B cell (primary cell): ENCODE measurements at regions of chr10 and their contacts with region 1.

Region 1: DNA sequence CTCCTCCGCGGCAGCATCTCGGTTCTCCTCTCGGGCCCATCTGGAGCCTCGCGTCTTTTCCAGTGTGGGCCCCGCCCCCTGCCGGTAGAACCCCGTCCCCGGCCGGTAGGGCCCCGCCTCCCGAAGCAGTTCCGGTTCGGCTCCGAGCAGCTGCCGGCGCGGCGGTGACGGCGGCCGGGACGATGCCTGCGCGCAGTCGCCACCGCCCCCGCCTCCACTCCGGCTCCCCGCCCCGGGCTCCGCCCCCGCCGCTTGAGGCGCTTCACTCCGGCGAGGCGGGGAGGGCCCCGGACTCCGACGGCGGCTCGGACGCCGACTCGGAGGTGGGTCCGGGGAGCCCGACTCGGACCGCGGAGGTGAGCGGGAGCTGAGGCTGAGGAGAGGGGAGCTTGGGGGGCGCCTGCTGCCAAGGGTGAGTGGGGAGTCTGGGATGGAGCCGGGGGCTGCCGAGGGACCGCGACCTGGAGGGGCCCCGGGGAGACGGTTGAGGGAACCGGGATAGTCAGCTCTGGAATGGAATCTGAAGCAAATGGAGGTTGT is at the start of gene SAMD8:
- DNase-seq: peak; percentile 98
- ATAC-seq: peak; percentile 84
- H3K4me3 ChIP-seq: peak within 1 kb of the TSS; percentile 73 to 100 (median 91)
- H3K4me3 Mint-ChIP-seq: peak within 1 kb of the TSS; percentile 89
- H3K27ac ChIP-seq: peak within 1 kb of the TSS; percentile 98
- H3K27ac Mint-ChIP-seq: peak within 1 kb of the TSS; percentile 90
- H3K4me1 ChIP-seq: peaks cover 18 to 24% of the 10 kb centered on the region in 2 donors
- H3K4me1 Mint-ChIP-seq: peaks cover 44% of the 10 kb centered on the region
- H3K27me3 ChIP-seq: no peaks in the 10 kb centered on the region
- H3K27me3 Mint-ChIP-seq: no peaks in the 10 kb centered on the region
- CTCF ChIP-seq: peak; percentile 34
- total RNA-seq, gene SAMD8: 31.7 and 35.7 TPM in 2 replicates

Region 2: DNA sequence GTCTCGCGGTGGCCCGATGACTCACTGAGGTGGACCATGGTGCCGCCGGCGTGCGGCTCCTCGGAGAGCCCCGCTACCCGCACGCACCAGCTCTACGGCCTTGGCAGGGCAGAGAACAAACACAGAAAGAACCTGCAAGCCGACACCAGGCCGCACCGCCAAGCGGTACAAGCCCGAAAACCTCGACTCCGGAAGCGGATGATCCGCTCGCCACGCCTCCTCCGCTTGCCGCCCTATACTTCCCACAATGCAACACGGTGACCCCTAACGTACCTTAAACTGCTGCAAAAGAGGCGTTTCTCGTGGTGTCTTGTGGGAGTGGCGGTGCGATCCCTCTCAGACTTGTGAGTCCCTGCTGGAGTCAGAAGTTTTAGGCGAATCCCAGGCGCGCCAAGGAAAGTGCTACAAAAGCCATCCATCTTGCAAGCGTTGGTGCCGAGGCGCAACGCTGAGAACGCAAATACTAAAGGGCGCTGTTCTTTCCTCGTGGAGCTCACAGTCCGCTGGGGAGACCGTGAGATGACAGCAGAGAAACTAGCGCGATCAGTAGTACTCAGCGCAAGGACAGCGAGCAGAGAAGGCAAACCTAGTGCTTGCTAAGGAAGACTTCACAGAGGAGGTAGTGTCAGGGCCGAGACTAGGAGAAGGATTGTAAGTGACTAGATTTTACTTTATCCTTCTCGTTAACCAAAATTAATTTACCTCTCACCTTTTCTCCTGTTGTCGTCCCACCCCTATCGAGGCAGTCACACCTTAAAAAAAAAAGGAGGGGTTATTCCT is 1858.8 kb before region 1 on chr10 and contains the start of gene MRPS16:
- CTCF ChIA-PET with region 1: no interaction called
- POLR2A ChIA-PET with region 1: no interaction called
- intact Hi-C with region 1: loop called (anchors 2 kb)
- DNase-seq: peak; percentile 95
- ATAC-seq: peak; percentile 90
- H3K4me3 ChIP-seq: peak within 1 kb of the TSS; percentile 76 to 98 (median 90)
- H3K4me3 Mint-ChIP-seq: peak within 1 kb of the TSS; percentile 100
- H3K27ac ChIP-seq: peak within 1 kb of the TSS; percentile 83 to 92
- H3K27ac Mint-ChIP-seq: peak within 1 kb of the TSS; percentile 90
- H3K4me1 ChIP-seq: peaks cover 23 to 28% of the 10 kb centered on the region in 2 donors
- H3K4me1 Mint-ChIP-seq: peaks cover 43% of the 10 kb centered on the region
- H3K27me3 ChIP-seq: no peaks in the 10 kb centered on the region
- H3K27me3 Mint-ChIP-seq: no peaks in the 10 kb centered on the region
- CTCF ChIP-seq: no peak
- total RNA-seq, gene MRPS16: 47.9 and 49.6 TPM in 2 replicates

Region 3: GRCh38 chr10:74826142-74827044 is 285.0 kb before region 1 on chr10 and contains the start of gene KAT6B:
- CTCF ChIA-PET with region 1: no interaction called
- POLR2A ChIA-PET with region 1: no interaction called
- intact Hi-C with region 1: loop called (anchors 1 kb)
- DNase-seq: peak; percentile 100
- ATAC-seq: peak; percentile 75
- H3K4me3 ChIP-seq: peak within 1 kb of the TSS; percentile 81 to 99 (median 90)
- H3K4me3 Mint-ChIP-seq: peak within 1 kb of the TSS; percentile 93
- H3K27ac ChIP-seq: peak within 1 kb of the TSS; percentile 91 to 99
- H3K27ac Mint-ChIP-seq: peak within 1 kb of the TSS; percentile 97
- H3K4me1 ChIP-seq: peaks cover 30 to 38% of the 10 kb centered on the region in 2 donors
- H3K4me1 Mint-ChIP-seq: peaks cover 42% of the 10 kb centered on the region
- H3K27me3 ChIP-seq: no peaks in the 10 kb centered on the region
- H3K27me3 Mint-ChIP-seq: no peaks in the 10 kb centered on the region
- CTCF ChIP-seq: peak; percentile 39
- total RNA-seq, gene KAT6B: 111 and 119 TPM in 2 replicates

Region 4: GRCh38 chr10:75129537-75129936 is 18.1 kb after region 1 on chr10:
- CTCF ChIA-PET with region 1: interaction called, 4 read pairs
- POLR2A ChIA-PET with region 1: interaction called, 4 read pairs
- intact Hi-C with region 1: loop called (anchors 1 kb)
- DNase-seq: peak; percentile 48
- ATAC-seq: peak; percentile 12
- H3K4me3 ChIP-seq: peak overlapping the region in 1 of 5 experiments; percentile 31
- H3K4me3 Mint-ChIP-seq: peak overlapping the region; percentile 73
- H3K27ac ChIP-seq: peak overlapping the region; percentile 82 to 99
- H3K27ac Mint-ChIP-seq: peak overlapping the region; percentile 95
- H3K4me1 ChIP-seq: peaks cover 36 to 40% of the 10 kb centered on the region in 2 donors
- H3K4me1 Mint-ChIP-seq: peaks cover 51% of the 10 kb centered on the region
- H3K27me3 ChIP-seq: no peaks in the 10 kb centered on the region
- H3K27me3 Mint-ChIP-seq: no peaks in the 10 kb centered on the region
- CTCF ChIP-seq: no peak

Region 5: DNA sequence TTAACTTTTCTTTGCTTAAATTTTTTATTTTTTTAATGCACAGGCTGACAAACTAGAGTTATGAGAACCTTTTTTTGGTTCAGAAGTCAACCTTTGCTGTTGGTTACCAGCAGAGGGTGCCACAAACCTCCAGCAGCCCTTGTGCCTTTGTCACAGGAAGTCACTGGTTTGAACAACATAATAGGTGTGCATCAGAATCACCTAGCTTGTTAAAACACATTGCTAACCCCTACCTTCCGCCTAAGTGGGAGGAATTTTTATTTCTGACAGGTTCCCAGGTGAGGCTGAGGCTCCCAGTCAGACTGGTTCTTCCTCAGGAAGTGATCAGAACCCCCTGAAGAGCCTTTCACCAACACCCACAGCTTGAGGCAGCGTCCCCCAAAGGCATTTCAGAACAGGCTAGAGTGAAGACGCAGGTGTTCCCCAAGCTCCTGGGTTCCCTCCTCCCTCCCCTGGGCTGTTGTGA is 76.6 kb after region 1 on chr10:
- CTCF ChIA-PET with region 1: interaction called, 4 read pairs
- POLR2A ChIA-PET with region 1: interaction called, 11 read pairs
- intact Hi-C with region 1: no loop called
- DNase-seq: peak; percentile 77
- ATAC-seq: peak; percentile 73
- H3K4me3 ChIP-seq: no peak overlapping the region
- H3K4me3 Mint-ChIP-seq: no peak overlapping the region
- H3K27ac ChIP-seq: peak overlapping the region in 1 of 2 donors; percentile 11
- H3K27ac Mint-ChIP-seq: peak overlapping the region; percentile 41
- H3K4me1 ChIP-seq: peaks cover 3% of the 10 kb centered on the region in 2 donors
- H3K4me1 Mint-ChIP-seq: no peaks in the 10 kb centered on the region
- H3K27me3 ChIP-seq: no peaks in the 10 kb centered on the region
- H3K27me3 Mint-ChIP-seq: no peaks in the 10 kb centered on the region
- CTCF ChIP-seq: peak; percentile 79

Region 6: DNA sequence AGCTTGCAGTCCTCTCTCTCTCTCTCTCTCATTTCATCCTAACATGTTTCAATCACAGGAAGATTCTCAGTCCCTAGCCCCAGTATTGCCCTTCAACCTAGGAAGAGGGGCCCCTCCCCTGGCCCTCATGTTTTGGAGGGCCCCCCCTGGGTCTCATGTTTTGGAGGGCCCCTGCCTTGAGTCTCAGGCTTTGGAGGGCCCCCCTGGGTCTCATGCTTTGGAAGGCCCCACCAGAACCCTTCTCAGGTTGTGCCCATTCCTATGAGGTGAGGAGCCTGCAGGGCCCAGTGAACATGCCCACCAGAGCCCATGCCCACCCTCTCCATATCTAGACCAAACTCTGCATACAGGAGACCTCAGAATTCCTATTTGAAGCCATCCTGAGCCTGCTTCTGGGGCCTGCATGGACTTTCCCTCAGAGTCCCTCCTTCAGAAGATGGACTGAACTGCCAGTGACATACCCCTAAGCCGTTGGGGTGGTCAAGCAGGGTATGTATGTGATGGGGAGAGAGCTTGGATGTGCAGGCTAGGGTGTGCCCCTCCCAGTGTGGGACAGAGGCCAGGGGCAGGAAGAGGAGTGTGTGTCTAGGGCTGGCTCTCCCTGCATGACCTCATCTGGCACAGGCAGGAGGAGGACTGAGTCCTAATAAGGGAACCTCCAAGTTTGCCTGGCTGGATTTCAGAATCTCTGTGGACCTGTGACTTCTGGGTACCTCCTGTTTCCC is 91.0 kb after region 1 on chr10:
- CTCF ChIA-PET with region 1: no interaction called
- POLR2A ChIA-PET with region 1: no interaction called
- intact Hi-C with region 1: no loop called
- DNase-seq: no peak
- ATAC-seq: no peak
- H3K4me3 ChIP-seq: no peak overlapping the region
- H3K4me3 Mint-ChIP-seq: no peak overlapping the region
- H3K27ac ChIP-seq: no peak overlapping the region
- H3K27ac Mint-ChIP-seq: no peak overlapping the region
- H3K4me1 ChIP-seq: no peaks in the 10 kb centered on the region
- H3K4me1 Mint-ChIP-seq: no peaks in the 10 kb centered on the region
- H3K27me3 ChIP-seq: no peaks in the 10 kb centered on the region
- H3K27me3 Mint-ChIP-seq: no peaks in the 10 kb centered on the region
- CTCF ChIP-seq: no peak

Region 7: DNA sequence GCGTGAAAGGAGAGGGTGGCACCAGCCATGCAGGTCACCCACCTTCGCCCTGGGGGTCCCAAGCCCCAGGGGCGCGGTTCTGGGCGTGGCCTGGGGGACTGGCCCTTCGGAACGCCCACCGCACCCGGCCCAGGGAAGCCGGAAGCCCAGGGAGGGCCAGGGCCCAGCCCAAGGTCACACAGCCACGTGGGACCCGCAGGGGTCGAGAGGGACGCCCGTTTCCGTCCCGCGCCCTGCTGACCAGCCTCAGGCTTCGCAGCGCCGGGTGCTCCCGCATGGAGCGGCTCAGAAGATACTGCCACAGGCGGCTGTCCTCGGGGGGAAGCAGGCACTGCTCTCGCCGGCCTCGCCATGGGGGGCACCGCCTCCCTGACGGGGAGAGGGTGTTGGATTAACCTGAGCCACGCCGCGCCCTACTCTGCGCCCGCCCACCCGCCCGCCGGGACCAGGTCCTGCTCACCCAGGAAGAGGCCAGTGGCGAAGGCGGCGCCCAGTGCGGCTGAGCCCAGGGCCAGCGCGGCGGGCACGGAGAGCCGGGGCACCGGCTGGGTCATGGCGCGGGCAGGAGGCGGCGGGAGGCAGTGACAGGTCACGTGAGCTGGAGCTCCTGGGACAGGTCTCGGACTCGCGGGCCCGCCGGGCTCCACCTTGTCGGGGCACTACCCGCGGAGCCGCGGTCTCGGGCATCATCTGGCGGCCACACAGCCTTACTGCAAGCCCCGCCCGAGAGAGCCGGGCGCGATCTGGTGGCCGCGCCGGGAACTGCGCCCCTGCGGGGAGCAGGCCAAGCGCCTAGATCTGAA is 124.1 kb after region 1 on chr10 and contains the start of gene COMTD1:
- CTCF ChIA-PET with region 1: interaction called, 7 read pairs
- POLR2A ChIA-PET with region 1: interaction called, 6 read pairs
- intact Hi-C with region 1: loop called (anchors 1 kb)
- DNase-seq: peak; percentile 94
- ATAC-seq: peak; percentile 70
- H3K4me3 ChIP-seq: peak within 1 kb of the TSS; percentile 17 to 80 (median 71)
- H3K4me3 Mint-ChIP-seq: peak within 1 kb of the TSS; percentile 85
- H3K27ac ChIP-seq: peak within 1 kb of the TSS; percentile 2 to 57
- H3K27ac Mint-ChIP-seq: peak within 1 kb of the TSS; percentile 74
- H3K4me1 ChIP-seq: peaks cover 4 to 20% of the 10 kb centered on the region in 2 donors
- H3K4me1 Mint-ChIP-seq: peaks cover 18% of the 10 kb centered on the region
- H3K27me3 ChIP-seq: no peaks in the 10 kb centered on the region
- H3K27me3 Mint-ChIP-seq: no peaks in the 10 kb centered on the region
- CTCF ChIP-seq: peak; percentile 100
- total RNA-seq, gene COMTD1: 12.3 and 14.5 TPM in 2 replicates